Aorta (tissue), 5 donors: ENCODE measurements at regions of chr4 and their contacts with region 1.

Region 1: GRCh38 chr4:80365928-80366327 is 30.4 kb downstream of the CFAP299 start:
- DNase-seq: no peak
- ATAC-seq: no peak
- H3K4me3 ChIP-seq: no peak overlapping the region
- H3K27ac ChIP-seq: no peak overlapping the region
- H3K4me1 ChIP-seq: no peaks in the 10 kb centered on the region
- H3K27me3 ChIP-seq: no peaks in the 10 kb centered on the region

Region 2: GRCh38 chr4:80989921-80990544 is 624.1 kb after region 1 on chr4:
- intact Hi-C with region 1: loop called (anchors 5 to 10 kb)
- DNase-seq: no peak
- ATAC-seq: no peak
- H3K4me3 ChIP-seq: no peak overlapping the region
- H3K27ac ChIP-seq: no peak overlapping the region
- H3K4me1 ChIP-seq: no peaks in the 10 kb centered on the region
- H3K27me3 ChIP-seq: no peaks in the 10 kb centered on the region